ENCODE measurements at regions of chr22 and their contacts with region 1.

Region 1: DNA sequence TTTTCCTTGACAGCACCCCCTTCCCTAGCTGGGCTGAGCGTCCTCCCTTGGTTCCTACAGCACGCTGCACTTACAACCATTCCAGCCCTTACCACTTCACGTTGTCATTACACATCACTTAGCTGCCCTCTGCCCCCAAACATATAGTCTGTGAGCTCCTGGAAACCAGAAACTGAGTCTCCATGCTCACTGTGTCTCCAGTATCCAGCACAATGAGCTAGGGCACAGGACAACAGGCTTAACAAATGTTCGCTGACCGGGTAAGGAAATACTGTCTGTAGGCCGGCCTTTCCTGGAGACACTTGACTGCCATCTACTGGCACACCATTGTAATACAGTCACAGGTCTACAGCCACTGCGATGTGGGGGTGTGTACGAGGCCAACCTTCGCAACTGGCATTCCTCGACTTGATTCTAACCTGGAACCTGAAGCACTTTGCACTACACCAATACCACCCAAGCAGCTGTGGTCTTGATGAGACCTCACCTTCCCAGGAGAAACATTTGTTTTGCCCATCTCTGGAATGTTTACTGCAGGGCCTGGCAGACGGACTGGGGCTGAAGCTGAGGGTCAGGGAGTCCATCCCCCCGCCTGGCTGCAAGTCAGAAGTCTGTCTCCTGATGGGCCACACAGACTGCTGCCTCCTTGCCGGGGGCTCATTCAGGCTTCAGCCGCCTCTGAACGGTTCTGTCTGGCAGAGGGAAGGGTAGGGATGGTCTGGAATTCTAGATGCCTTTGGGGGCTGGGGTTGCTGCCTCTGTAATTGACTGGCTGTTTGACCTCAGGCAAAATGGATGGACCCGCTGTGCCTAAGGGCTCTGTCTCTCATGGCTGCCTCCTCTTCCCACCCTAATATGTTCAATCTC is 72.0 kb downstream of the SYN3 start:
- DNase-seq: peak; percentile 21
- H3K4me3 ChIP-seq: no peak overlapping the region
- CTCF ChIP-seq: peak; percentile 86

Region 2: GRCh38 chr22:32803020-32803754 is 182.9 kb before region 1 on chr22:
- CTCF ChIA-PET with region 1: interaction called, 27 read pairs
- POLR2A ChIA-PET with region 1: interaction called, 7 read pairs
- DNase-seq: no peak
- H3K4me3 ChIP-seq: peak overlapping the region; percentile 77
- CTCF ChIP-seq: no peak

Region 3: DNA sequence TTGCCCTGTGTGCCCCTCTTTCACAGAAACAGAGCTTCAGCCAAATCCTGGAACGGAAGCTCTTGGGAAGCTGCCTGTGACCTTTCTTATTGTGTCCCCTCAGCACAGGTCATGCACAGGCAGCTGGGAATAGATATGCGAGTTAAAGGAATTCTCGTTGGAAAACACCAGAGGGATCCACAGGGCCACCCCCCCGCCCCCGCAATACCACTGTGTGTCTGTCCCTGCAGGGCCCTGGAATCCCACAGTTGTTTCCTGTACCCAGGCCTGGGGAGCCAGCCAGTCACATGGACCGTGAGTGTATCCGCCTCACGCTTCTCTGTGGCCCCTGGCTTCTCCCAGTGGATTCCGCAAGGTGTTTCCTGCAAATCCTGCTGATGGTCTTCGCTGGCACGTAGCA is 155.7 kb before region 1 on chr22:
- CTCF ChIA-PET with region 1: interaction called, 12 read pairs
- POLR2A ChIA-PET with region 1: no interaction called
- DNase-seq: no peak
- H3K4me3 ChIP-seq: no peak overlapping the region
- CTCF ChIP-seq: no peak

Region 4: DNA sequence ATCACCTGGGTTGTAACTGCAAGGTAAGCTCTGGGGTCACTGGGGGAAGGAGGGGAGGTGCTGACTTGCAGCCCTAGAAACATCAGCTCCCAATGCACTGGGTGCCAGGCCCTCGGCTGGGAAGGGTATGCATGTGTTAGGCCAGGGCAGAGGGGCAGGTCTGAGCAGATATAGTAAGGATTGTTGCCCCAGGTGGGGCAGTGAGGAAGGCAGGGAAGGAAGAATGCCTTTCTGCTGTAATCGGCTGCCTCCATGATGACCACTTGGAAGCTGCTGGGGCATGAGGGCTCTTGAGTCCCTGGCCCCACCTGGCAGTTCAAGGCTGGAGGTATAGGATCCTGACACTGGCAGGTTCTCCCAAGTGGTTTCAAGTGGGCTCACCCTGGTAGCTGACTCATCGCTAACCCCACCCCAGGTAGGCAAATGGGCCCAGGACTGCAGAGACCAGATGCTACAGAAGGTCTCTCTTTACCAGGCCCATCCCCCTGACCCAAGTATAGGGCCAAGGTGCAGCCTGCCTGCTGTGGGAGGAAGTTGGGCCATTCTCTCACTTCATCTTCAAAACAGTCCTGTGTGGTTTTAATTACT is 127.9 kb before region 1 on chr22:
- CTCF ChIA-PET with region 1: interaction called, 11 read pairs
- POLR2A ChIA-PET with region 1: no interaction called
- DNase-seq: no peak
- H3K4me3 ChIP-seq: no peak overlapping the region
- CTCF ChIP-seq: no peak

Region 5: GRCh38 chr22:32926600-32926999 is 59.5 kb before region 1 on chr22:
- CTCF ChIA-PET with region 1: interaction called, 18 read pairs
- POLR2A ChIA-PET with region 1: no interaction called
- DNase-seq: no peak
- H3K4me3 ChIP-seq: no peak overlapping the region
- CTCF ChIP-seq: peak; percentile 54

Region 6: DNA sequence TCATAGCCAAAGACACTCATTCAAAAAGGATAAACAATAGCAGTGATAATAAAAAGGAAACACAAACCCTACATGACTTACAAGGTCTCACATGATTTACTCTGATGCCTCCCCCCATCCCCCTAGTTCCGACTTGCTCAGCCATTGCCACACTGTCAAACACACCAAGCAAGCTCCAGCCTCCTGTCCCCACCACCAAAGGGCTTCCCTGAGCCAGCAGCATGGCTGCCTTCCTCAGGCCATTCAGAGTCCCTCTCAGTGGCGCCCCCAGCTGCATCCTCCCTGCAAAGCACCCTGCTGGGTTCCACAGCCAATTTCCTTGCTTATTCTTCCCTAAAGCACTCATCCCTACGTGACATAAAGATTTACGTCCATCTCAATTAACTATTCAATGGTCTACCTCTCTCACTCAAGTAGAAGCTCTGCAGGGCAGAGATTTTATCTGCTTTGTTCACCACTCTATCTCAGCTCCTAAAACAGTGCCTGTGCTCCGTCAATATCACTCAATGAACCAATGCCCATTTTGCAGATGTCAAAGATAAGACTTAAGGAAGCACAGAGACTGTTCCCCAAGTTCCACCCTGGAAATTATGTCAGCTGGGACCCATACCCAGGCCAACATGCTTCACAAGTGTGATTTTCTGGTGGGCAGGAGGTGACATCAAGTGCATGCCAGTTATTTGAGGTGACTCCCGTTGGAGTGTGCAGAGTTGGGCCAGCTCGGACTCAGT is 34.9 kb before region 1 on chr22:
- CTCF ChIA-PET with region 1: no interaction called
- POLR2A ChIA-PET with region 1: no interaction called
- DNase-seq: no peak
- H3K4me3 ChIP-seq: no peak overlapping the region
- CTCF ChIP-seq: no peak

Region 7: DNA sequence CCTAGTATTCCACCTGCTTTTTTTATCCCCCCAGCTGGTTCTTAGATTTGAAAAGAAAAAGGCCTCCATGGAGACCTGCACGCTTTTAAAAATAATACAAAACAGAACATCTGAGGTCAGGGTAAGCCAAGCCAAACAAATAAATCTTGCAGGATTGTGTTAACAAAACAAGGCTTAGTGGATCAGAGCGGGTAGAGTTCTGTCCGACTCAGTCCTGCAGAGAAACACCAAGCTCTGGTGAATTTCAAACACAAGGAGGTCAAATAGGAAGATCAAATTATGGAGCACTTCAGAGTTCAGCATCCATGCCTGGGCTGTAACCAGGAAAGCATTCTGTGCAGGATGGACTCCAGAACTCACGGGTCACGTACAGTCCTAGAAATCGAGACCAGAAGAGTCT is 14.9 kb before region 1 on chr22:
- CTCF ChIA-PET with region 1: interaction called, 18 read pairs
- POLR2A ChIA-PET with region 1: no interaction called
- DNase-seq: no peak
- H3K4me3 ChIP-seq: no peak overlapping the region
- CTCF ChIP-seq: no peak

Region 8: DNA sequence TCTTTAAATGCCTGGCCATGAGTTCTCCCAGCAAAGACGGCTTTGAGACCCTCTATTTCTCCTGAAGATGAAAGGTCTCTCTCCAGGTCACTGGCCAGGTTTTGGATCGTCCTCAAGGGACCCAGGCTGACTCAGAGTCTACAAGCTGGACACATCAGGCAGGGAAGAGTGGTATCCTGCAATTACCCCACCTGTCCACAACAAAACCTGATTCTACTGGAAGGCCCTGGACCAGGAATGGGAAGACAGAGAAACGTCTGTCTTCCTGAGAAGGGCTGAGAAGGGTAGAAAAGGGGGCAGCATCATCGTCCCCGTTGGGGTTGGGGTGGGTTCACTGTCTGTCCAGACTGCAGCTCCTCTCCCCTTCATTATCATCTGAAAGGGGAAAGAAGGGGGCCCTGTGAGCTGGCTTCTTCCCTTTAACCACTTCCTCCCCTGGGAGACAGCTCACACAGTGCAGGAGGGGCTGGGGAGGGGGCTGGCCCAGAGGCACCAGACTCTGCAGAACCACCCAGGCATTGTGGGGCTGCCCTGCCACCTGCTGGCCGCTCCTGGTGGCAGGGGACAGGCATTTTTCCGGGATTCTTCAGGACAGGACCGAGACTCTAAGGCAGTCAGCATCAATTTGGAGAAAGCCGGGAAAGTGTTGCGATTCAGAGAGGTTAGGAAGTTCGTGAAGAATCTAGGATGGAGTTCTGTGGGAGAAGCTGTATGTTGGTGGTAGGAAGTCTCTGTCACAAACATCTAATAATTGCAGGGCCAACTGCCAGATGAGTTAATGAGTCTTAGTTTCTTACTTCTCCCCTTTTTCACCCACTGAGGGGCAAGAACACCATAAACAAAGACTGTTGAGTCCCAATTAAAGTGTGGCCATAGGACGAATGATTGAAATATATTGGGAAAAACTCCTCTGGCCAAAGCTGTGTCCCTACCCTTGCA is 14.5 kb after region 1 on chr22:
- CTCF ChIA-PET with region 1: interaction called, 25 read pairs
- POLR2A ChIA-PET with region 1: no interaction called
- DNase-seq: no peak
- H3K4me3 ChIP-seq: no peak overlapping the region
- CTCF ChIP-seq: peak; percentile 96